ENCODE measurements at regions of chr2 and their contacts with region 1.

Region 1: DNA sequence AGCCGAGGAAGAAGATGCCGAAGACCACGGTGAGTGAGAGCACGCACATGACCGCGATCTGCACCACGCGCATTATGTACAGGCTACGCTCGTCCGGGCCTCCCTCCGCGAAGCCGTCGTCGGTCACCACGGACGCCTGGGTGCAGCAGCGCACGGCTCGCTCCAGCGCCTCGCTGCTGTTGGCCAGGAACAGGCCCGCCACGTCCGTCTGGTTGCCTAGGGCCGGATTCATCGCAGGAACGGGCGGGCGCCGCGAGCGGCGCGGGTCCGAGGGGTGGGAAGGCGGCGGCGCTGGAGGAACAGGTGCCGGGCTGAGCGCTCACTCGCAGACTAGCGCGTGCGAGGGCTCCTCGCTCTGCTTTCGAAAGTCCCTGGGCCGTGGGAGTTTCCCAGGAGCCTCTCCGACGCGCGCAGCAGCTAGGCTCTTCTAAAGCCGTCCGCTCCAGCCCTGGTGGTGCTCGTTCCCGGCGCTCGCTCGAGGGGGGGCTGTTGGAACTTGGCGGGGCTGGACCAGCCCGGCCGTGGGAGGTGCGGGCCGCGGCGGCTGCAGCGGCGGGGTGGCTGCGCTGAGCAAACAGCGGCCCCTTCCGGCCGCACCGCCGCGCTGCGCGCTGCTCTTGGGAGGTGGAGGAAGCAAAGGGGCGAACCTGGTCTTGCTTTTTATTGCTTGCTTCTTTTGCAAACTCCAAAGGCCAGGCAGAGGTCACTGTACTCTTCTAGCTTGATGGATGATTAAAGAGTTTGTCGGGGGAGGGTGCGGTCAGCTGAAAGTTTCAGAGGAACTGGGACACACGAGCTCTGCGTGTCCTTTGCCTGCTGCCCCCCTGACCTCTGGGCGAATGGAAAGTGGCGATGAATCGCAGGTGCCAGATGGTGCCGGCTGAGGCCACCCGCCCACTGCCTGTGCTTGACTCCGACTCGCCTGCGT is at the start of gene RPRM:
- DNase-seq: peak; percentile 68 to 92
- H3K4me3 ChIP-seq: peak within 1 kb of the TSS; percentile 68 to 72 (median 70)
- H3K27ac ChIP-seq: no peak within 1 kb of the TSS
- H3K4me1 ChIP-seq: peaks cover 7 to 13% (median 11%) of the 10 kb centered on the region in 4 experiments
- H3K27me3 ChIP-seq: peaks cover 0 to 10% (median 6%) of the 10 kb centered on the region in 4 experiments; a peak in 4 of 7 replicates
- CTCF ChIP-seq: peak; percentile 90 to 91 (median 91)
- EP300 ChIP-seq: peak in 1 of 2 experiments; percentile 62; a peak in 1 of 3 replicates
- POLR2A ChIP-seq: no peak
- RAD21 ChIP-seq: peak; percentile 87 to 92
- total RNA-seq, gene RPRM: 16.2 and 16.3 TPM in 2 replicates

Region 2: DNA sequence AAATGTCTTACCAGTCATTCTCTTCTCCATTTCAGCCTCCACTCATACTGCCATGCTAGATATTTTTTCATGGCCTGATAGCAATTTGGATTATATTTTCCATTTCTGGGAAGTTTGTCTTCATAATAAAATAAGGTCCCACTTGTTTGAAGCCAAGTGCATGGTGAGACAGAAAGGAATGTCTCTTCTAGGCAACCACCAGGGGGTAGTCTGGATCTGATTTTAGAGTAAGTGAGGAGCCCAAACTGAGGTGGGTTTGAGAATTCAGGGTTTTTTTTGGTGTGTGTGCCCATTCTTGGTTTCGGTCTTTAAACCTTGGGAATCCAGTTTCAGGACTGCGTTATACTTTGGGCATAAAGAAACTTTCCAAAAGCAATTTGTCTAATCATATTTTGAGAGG is 315.5 kb before region 1 on chr2:
- CTCF ChIA-PET with region 1: interaction called, 12 read pairs
- POLR2A ChIA-PET with region 1: no interaction called
- DNase-seq: peak in 1 of 2 experiments; percentile 5
- H3K4me3 ChIP-seq: no peak overlapping the region
- H3K27ac ChIP-seq: no peak overlapping the region
- H3K4me1 ChIP-seq: no peaks in the 10 kb centered on the region
- H3K27me3 ChIP-seq: no peaks in the 10 kb centered on the region
- CTCF ChIP-seq: peak in 2 of 3 experiments; percentile 70 to 77; a peak in 3 of 4 replicates
- EP300 ChIP-seq: no peak
- POLR2A ChIP-seq: no peak
- RAD21 ChIP-seq: peak; percentile 89 to 92

Region 3: DNA sequence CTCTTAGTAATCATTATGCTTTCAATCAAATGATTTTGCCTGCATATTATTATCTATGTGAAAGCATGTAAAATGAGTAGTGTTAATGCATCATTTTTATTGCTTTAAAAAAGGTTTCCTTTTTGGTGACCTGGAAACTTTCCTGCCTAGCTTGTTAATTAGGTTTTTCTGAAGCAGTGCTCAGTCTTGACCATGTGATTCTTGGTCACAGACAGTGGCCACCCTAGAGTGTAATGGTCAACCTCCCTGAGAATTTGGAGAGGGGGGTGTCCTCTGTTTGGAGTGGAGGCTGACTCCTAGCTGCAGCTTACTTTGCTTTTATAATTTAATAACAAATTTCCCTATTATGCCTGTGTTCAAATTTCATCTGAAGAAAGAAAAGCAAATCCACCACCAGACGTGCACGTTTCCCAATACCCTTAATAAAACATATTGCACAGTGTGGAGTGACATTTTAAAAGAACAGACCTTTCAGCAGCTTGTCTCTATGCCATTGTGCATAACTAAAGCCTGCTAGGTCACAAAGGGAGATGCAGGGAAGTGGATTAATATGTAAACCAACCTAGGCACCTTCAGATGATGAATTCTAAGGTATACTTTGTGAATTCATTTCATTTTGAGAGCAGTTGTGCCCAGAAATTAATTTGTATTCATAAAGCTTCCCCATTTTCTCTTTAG is 130.6 kb before region 1 on chr2:
- CTCF ChIA-PET with region 1: interaction called, 66 read pairs
- POLR2A ChIA-PET with region 1: no interaction called
- DNase-seq: no peak
- H3K4me3 ChIP-seq: no peak overlapping the region
- H3K27ac ChIP-seq: no peak overlapping the region
- H3K4me1 ChIP-seq: 0 out of 7 replicates have a peak, but pooled peaks cover 0 to 3% (median 0%) of the 10 kb centered on the region in 4 experiments
- H3K27me3 ChIP-seq: no peaks in the 10 kb centered on the region
- CTCF ChIP-seq: no peak
- EP300 ChIP-seq: no peak
- POLR2A ChIP-seq: no peak
- RAD21 ChIP-seq: no peak

Region 4: DNA sequence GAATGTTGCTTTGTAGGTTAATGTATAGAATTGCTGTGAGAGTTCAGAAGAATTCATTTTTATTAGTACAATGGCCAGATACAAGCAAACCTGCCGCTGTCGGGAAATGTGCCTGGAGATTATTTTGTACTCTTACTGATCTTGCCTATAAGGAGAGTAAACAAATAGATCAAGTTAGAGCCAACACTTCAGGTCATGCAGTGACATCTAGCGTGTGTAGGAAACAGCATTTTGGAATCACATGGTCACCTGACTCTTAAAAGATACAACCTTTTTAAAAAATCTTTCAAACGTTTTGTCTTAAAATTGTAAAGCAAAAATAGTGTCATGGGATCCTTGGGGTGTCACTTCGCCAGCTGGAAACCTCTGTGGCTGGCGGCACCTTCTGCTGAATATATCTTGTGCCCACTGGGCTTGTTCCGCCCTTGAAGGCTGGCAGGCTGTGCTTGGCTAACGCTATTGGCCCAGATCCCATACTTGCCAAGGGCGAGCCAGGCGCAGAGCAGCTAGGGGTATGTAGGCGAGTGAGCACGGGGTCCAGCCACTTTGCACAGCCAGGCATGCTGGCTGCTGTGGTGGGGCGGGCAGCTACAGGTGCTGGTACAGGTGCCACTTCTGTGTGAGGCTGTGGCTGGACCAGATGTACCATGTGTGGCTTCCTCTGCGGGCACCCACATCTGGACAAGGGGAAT is 19.5 kb after region 1 on chr2:
- CTCF ChIA-PET with region 1: interaction called, 17 read pairs
- POLR2A ChIA-PET with region 1: no interaction called
- DNase-seq: no peak
- H3K4me3 ChIP-seq: no peak overlapping the region
- H3K27ac ChIP-seq: no peak overlapping the region
- H3K4me1 ChIP-seq: 0 out of 7 replicates have a peak, but pooled peaks cover 0 to 2% (median 0%) of the 10 kb centered on the region in 4 experiments
- H3K27me3 ChIP-seq: no peaks in the 10 kb centered on the region
- CTCF ChIP-seq: no peak
- EP300 ChIP-seq: no peak
- POLR2A ChIP-seq: no peak
- RAD21 ChIP-seq: 0 out of 4 replicates have a peak, but pooled peaks of 1 of the 2 experiments have one; percentile 19

Region 5: DNA sequence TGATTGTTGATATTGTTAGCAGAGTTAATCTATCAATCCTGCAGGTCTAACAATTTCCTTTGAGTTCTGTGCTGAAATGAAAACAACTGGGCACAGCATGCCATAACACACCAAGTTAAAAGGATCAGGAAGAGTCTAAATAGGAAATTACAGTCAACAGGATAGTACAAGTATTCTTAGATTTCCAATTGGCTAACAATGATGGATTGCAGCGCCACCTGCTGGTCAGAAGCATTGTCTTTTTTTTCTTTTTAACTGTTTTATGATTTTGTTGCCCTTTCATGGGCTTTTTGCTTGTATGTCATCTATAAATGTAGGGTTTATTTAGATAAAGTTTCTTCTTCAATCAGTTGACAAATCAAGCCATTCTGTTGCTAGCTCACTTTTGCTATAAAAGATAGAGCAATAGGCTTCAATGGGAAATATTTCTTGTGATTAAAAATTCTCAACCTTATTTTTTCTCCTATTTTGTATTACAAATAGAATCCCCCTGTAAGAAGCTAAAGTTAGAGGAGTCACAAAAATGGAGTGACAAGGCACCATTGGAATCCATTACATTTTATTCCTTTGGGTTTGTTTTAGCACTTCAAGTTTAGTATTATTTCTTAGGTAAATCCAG is 40.8 kb after region 1 on chr2:
- CTCF ChIA-PET with region 1: interaction called, 12 read pairs
- POLR2A ChIA-PET with region 1: no interaction called
- DNase-seq: peak in 1 of 2 experiments; percentile 81
- H3K4me3 ChIP-seq: no peak overlapping the region
- H3K27ac ChIP-seq: no peak overlapping the region
- H3K4me1 ChIP-seq: no peaks in the 10 kb centered on the region
- H3K27me3 ChIP-seq: peaks cover 0 to 2% (median 0%) of the 10 kb centered on the region in 4 experiments; a peak in 1 of 7 replicates
- CTCF ChIP-seq: peak in 2 of 3 experiments; percentile 56 to 75; a peak in 2 of 4 replicates
- EP300 ChIP-seq: no peak
- POLR2A ChIP-seq: no peak
- RAD21 ChIP-seq: peak; percentile 84 to 85

Region 6: GRCh38 chr2:153944800-153945199 is 466.2 kb after region 1 on chr2:
- CTCF ChIA-PET with region 1: no interaction called
- POLR2A ChIA-PET with region 1: no interaction called
- DNase-seq: no peak
- H3K4me3 ChIP-seq: no peak overlapping the region
- H3K27ac ChIP-seq: no peak overlapping the region
- H3K4me1 ChIP-seq: no peaks in the 10 kb centered on the region
- H3K27me3 ChIP-seq: no peaks in the 10 kb centered on the region
- CTCF ChIP-seq: no peak
- EP300 ChIP-seq: no peak
- POLR2A ChIP-seq: no peak
- RAD21 ChIP-seq: no peak

Measured in H1 (cell line).